Dorsolateral prefrontal cortex (tissue), 120 donors: ENCODE measurements at regions of chr3 and their contacts with region 1.

Region 1: DNA sequence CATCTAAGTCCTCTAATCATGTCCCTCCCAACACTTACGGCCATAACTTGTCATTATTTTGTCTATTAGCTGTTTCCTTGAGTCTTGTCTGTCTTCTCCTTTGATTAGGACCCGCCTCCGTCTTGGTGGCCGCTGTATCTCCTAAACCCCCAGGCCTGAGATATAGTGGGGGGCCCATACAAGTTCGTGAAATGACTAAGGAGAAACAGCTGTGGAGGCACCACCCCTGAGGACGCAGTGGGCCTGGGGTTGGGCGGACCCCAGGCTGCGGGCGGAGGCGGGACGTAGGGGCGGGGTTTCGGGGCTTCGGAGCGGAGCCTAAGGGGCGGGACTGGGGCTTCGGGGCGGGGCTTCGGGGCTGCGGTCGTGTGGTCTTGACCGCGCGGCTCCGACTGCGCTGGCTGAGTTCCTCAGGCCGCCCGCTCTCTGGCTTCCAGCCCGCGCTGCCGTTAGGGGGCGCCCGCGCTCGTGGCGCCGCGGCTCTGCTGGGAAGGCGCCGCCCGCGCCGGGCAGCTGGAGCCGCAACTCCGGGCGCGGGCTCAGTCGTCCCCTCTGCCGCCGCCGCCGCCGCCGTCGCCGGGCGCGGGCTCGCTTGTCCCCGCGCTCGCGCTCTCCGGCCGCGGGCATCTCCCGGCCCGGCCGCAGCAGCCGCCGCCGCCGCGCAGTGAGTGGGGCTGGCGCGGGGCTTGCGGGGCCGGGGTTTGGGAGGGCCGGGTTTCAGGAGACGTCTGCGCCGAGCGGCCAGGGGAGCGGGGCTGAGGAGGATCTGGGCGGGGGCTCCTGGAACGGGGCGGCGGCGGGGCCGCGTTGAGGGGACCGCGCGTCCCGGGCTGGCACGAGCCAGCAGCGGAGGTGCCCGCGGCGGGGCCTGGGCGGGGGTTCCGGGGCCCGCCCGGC is at the start of gene KCTD6:
- DNase-seq: peak; percentile 75 to 94 (median 82)
- H3K4me3 ChIP-seq: peak within 1 kb of the TSS; percentile 55 to 94 (median 84)
- H3K27ac ChIP-seq: peak within 1 kb of the TSS; percentile 60 to 93 (median 85)
- H3K27me3 ChIP-seq: no peaks in the 10 kb centered on the region
- CTCF ChIP-seq: peak in 55 of 56 donors; percentile 46 to 90 (median 71)
- total RNA-seq, gene KCTD6: 21.0 to 44.7 (median 30.4) TPM

Region 2: GRCh38 chr3:58305882-58306711 is 185.7 kb before region 1 on chr3 and contains the starts of genes HTD2 and RPP14:
- intact Hi-C with region 1: loop called (anchors 1 to 2 kb)
- DNase-seq: peak; percentile 95 to 99 (median 98)
- H3K4me3 ChIP-seq: peak within 1 kb of the TSS; percentile 59 to 98 (median 86)
- H3K27ac ChIP-seq: peak within 1 kb of the TSS; percentile 83 to 100 (median 99)
- H3K27me3 ChIP-seq: no peaks in the 10 kb centered on the region
- CTCF ChIP-seq: peak; percentile 94 to 100 (median 98)
- total RNA-seq, gene HTD2: 5.0 to 23.1 (median 11.3) TPM
- total RNA-seq, gene RPP14: 10.7 to 30.0 (median 19.1) TPM

Region 3: DNA sequence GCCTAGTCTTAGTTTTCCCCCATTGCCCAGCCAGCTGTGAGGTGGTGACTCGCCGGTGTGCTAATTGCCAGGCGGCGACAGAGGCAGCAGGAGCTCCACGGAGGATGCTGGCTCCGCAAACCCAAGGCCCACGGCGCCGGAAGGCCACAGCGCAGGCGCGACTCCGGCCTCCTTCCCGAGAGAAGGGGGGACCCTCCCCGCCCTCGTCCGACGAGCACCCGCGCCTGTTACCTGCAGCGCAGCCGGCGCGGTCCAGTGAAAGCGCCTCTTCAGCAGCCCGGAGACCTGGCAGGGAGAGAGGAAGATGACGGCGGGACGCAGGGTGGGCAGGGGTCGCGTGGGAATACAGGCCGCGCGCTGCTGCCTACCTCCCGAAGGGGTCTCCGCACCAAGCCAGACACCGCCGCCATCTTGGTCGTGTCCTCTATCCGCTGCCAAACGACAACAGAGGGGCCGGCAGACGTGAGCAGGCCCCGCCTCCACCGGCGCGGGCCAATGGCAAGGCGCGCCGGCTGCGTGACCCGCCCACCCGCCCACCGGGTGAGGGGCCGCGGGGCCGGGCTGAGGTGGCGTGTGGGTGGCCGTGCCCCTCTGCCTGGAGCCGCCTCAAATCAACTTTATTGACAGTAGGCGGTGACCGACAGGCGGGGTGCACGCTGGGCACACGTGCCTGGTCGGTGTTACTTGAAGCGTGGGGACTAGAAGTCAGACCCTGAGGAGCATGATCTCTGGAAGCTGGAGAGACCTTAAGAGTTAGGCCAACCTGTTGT is 58.2 kb before region 1 on chr3 and contains the start of gene PDHB:
- intact Hi-C with region 1: loop called (anchors 5 kb)
- DNase-seq: peak; percentile 86 to 95 (median 90)
- H3K4me3 ChIP-seq: peak within 1 kb of the TSS; percentile 51 to 97 (median 82)
- H3K27ac ChIP-seq: peak within 1 kb of the TSS; percentile 81 to 100 (median 97)
- H3K27me3 ChIP-seq: no peaks in the 10 kb centered on the region
- CTCF ChIP-seq: peak in 34 of 56 donors; percentile 1 to 53 (median 27)
- total RNA-seq, gene PDHB: 33.2 to 82.3 (median 62.6) TPM

Region 4: GRCh38 chr3:58452176-58452575 is 39.6 kb before region 1 on chr3:
- intact Hi-C with region 1: no loop called
- DNase-seq: no peak
- H3K4me3 ChIP-seq: no peak overlapping the region
- H3K27ac ChIP-seq: peak overlapping the region in 5 of 59 donors; percentile 0 to 60 (median 34)
- H3K27me3 ChIP-seq: no peaks in the 10 kb centered on the region
- CTCF ChIP-seq: no peak

Region 5: DNA sequence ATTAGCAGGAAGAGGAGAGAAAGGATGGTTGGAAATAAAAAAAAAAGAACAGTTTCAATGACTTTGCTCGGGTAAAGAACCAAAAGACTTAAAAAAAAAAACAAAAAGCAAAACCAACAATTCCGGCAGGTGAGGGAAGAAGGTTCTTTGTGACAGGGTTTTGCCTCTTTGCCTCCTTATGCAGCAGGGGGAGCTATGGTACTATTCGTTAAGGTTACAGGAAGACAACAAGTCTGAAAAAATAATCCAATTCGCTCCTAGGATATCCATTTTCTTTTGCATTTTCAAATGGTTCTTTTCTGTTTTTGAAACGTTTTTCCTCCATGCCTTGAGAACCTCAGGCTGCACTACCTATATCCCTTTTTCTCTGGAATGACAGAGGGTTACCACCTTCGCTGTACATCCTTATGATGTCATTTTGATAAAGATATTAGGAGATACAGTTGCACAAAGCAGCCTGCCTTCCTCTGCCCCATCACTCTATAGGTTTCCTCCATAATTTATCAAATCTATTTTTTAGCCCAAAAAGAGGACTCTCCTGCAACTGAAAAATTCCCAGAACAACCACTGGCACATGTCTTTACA is 503.1 kb after region 1 on chr3:
- intact Hi-C with region 1: no loop called
- DNase-seq: peak in 1 of 10 donors; percentile 30
- H3K4me3 ChIP-seq: peak overlapping the region in 1 of 59 donors; percentile 7
- H3K27ac ChIP-seq: no peak overlapping the region
- H3K27me3 ChIP-seq: peaks cover 0 to 14% (median 0%) of the 10 kb centered on the region in 45 donors
- CTCF ChIP-seq: peak; percentile 32 to 76 (median 60)